ENCODE measurements at regions of chr4 and their contacts with region 1.

Region 1: GRCh38 chr4:87006676-87007527 is 72.1 kb downstream of the AFF1 start:
- DNase-seq: peak; percentile 91
- ATAC-seq: peak; percentile 82
- H3K4me3 Mint-ChIP-seq: peak overlapping the region; percentile 97
- H3K27ac Mint-ChIP-seq: peak overlapping the region; percentile 97
- H3K4me1 Mint-ChIP-seq: peaks cover 49% of the 10 kb centered on the region
- H3K27me3 Mint-ChIP-seq: no peaks in the 10 kb centered on the region

Region 2: DNA sequence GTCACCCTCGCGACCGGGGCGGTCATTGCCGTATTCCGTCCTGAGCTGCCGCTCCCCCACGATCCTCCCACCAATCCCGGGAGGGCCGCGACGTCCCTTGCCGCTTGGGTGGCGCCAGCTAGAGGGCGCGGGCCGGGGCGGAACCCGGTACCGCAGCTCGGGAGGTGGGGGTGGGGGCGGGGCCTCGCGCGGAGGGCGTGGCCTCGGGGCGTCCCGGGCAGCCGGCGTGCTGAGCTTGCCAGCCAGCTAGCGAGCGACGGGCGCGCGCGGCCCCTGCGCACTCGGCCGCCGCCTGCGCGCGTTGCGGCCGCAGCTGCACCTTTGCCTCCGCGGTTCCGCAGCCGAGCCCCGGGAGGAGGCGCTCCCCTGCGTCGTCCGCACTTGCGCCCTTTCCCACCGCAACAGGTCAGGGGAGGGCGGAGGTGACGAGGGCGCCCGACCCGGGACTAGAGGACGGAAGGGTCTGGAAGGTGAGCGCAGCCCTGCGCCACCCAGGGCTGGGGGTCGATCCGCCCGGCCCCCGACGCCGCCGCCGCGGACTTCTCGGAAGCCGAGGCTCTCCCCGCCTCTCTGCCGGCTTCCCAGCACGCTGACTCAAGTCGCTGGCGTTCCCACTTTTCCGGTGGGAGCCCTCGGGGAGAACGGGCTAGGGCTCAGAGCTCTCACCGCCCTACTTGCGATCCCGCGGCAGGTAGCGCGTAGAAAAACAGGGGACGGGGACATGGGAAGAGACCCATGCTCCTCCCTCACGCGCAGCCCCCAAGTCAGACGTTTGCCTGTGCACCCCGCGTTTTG is 71.9 kb before region 1 on chr4 and contains the start of gene AFF1:
- CTCF ChIA-PET with region 1: interaction called, 12 read pairs
- POLR2A ChIA-PET with region 1: interaction called, 60 read pairs
- intact Hi-C with region 1: loop called (anchors 1 kb)
- DNase-seq: peak; percentile 94
- ATAC-seq: peak; percentile 68
- H3K4me3 Mint-ChIP-seq: peak within 1 kb of the TSS; percentile 84
- H3K27ac Mint-ChIP-seq: peak within 1 kb of the TSS; percentile 97
- H3K4me1 Mint-ChIP-seq: peaks cover 40% of the 10 kb centered on the region
- H3K27me3 Mint-ChIP-seq: no peaks in the 10 kb centered on the region
- total RNA-seq, gene AFF1: 47.3 to 57.8 TPM

Region 3: DNA sequence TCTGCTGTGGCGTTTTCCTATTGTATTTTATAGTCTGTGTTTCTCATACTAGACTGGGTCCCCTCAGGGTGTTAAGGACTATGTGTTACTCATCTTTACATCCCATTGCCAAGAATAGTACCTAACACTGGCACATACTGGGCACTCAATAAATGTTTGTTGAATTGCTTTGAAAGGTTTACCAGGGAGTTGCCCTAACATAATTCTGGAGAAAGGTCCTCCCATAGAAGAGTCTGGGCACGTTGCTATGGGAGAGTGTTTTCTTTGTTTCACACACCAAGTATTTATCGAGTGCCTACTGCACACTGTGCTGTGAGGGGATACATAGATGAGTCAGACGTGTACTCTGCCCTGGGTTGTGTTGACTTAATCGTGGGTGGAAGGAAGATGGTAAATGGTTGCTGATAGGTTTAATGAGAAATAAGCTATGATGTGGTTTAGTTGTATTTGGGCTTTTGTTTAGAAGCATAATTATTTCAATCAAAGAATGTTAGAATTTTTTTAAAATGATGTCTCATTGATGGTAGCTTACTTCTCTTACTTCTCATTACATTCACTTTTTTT is 29.2 kb before region 1 on chr4:
- CTCF ChIA-PET with region 1: interaction called, 3 read pairs
- POLR2A ChIA-PET with region 1: interaction called, 3 read pairs
- intact Hi-C with region 1: loop called in 1 of 2 experiments (anchors 1 kb)
- DNase-seq: peak; percentile 43
- ATAC-seq: peak; percentile 84
- H3K4me3 Mint-ChIP-seq: no peak overlapping the region
- H3K27ac Mint-ChIP-seq: peak overlapping the region; percentile 59
- H3K4me1 Mint-ChIP-seq: peaks cover 67% of the 10 kb centered on the region
- H3K27me3 Mint-ChIP-seq: no peaks in the 10 kb centered on the region

Region 4: GRCh38 chr4:87058356-87059073 is 51.6 kb after region 1 on chr4:
- CTCF ChIA-PET with region 1: interaction called, 3 read pairs
- POLR2A ChIA-PET with region 1: no interaction called
- intact Hi-C with region 1: loop called (anchors 1 kb)
- DNase-seq: peak; percentile 79
- ATAC-seq: peak; percentile 80
- H3K4me3 Mint-ChIP-seq: peak overlapping the region; percentile 0
- H3K27ac Mint-ChIP-seq: peak overlapping the region; percentile 74
- H3K4me1 Mint-ChIP-seq: peaks cover 69% of the 10 kb centered on the region
- H3K27me3 Mint-ChIP-seq: no peaks in the 10 kb centered on the region

Region 5: GRCh38 chr4:87093443-87094123 is 86.7 kb after region 1 on chr4:
- CTCF ChIA-PET with region 1: interaction called, 20 read pairs
- POLR2A ChIA-PET with region 1: interaction called, 14 read pairs
- intact Hi-C with region 1: loop called (anchors 1 kb)
- DNase-seq: peak; percentile 60
- ATAC-seq: peak; percentile 79
- H3K4me3 Mint-ChIP-seq: no peak overlapping the region
- H3K27ac Mint-ChIP-seq: peak overlapping the region; percentile 78
- H3K4me1 Mint-ChIP-seq: peaks cover 52% of the 10 kb centered on the region
- H3K27me3 Mint-ChIP-seq: no peaks in the 10 kb centered on the region

Region 6: GRCh38 chr4:87220094-87220822 is 213.4 kb after region 1 on chr4 and contains the start of gene KLHL8:
- CTCF ChIA-PET with region 1: no interaction called
- POLR2A ChIA-PET with region 1: interaction called, 3 read pairs
- intact Hi-C with region 1: loop called (anchors 1 to 5 kb)
- DNase-seq: peak; percentile 92
- ATAC-seq: peak; percentile 91
- H3K4me3 Mint-ChIP-seq: peak within 1 kb of the TSS; percentile 89
- H3K27ac Mint-ChIP-seq: peak within 1 kb of the TSS; percentile 92
- H3K4me1 Mint-ChIP-seq: peaks cover 17% of the 10 kb centered on the region
- H3K27me3 Mint-ChIP-seq: peaks cover 2% of the 10 kb centered on the region
- total RNA-seq, gene KLHL8: 9.8 to 10.3 TPM

Region 7: DNA sequence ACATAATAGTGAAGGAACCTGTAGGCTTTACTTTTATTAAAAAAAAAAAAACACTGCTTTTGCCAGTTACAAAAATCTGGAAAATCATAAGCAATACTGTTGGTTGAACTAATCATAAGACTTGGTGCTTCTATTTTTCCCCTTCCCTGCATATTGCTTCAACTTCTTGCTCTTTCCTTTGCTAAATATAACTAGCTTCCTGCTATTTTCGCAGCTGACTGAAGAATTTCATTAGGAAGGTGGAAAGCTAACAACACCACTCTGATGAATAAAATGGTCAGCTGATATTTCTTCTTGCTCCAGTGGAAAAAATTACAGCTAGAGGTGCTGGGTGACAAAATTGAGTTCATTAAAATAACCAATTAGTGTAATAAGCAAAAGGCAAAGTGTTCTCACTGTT is 865.1 kb after region 1 on chr4:
- CTCF ChIA-PET with region 1: no interaction called
- POLR2A ChIA-PET with region 1: no interaction called
- intact Hi-C with region 1: no loop called
- DNase-seq: no peak
- ATAC-seq: no peak
- H3K4me3 Mint-ChIP-seq: no peak overlapping the region
- H3K27ac Mint-ChIP-seq: no peak overlapping the region
- H3K4me1 Mint-ChIP-seq: no peaks in the 10 kb centered on the region
- H3K27me3 Mint-ChIP-seq: peaks cover 22% of the 10 kb centered on the region

Measured in activated CD4-positive, alpha-beta T cell treated with anti-CD3 and anti-CD28 coated beads for 36 hours (primary cell).